ENCODE measurements at regions of chr16 and their contacts with region 1.

Region 1: GRCh38 chr16:29805378-29806098 is 791 bp upstream of the MAZ start:
- DNase-seq: peak; percentile 99
- ATAC-seq: peak; percentile 63
- H3K4me3 Mint-ChIP-seq: peak overlapping the region; percentile 100
- H3K27ac Mint-ChIP-seq: peak overlapping the region; percentile 96
- H3K4me1 Mint-ChIP-seq: peaks cover 30% of the 10 kb centered on the region
- H3K27me3 Mint-ChIP-seq: no peaks in the 10 kb centered on the region

Region 2: DNA sequence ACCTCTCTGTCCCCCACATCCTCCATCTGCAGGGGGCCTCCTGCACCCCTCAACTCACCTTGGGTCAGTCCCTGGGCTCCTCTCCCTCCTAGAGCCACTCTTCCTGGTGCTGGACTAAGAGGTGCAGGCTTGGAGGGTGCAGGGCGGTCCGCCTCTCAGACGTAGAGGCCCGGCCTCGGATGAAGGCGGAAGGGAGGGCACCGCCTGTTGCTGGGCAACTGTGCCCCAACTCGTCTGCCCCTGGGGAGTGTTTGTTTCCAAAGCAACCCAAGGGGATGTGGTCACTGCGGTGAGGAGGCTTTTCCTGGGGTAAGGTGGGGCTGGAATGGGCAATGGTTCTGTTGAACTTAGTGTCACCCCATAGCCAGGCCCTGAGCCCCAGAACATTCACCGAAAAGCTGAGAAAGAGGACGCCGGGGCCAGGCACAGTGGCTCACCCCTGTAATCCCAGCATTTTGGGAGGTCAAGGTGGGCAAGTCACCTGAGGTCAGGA is 59.6 kb before region 1 on chr16 and contains the start of gene C16orf54:
- POLR2A ChIA-PET with region 1: interaction called, 35 read pairs
- DNase-seq: peak; percentile 88
- ATAC-seq: peak; percentile 81
- H3K4me3 Mint-ChIP-seq: peak within 1 kb of the TSS; percentile 98
- H3K27ac Mint-ChIP-seq: peak within 1 kb of the TSS; percentile 98
- H3K4me1 Mint-ChIP-seq: peaks cover 38% of the 10 kb centered on the region
- H3K27me3 Mint-ChIP-seq: no peaks in the 10 kb centered on the region
- total RNA-seq, gene C16orf54: 84.2 to 88.0 TPM

Region 3: DNA sequence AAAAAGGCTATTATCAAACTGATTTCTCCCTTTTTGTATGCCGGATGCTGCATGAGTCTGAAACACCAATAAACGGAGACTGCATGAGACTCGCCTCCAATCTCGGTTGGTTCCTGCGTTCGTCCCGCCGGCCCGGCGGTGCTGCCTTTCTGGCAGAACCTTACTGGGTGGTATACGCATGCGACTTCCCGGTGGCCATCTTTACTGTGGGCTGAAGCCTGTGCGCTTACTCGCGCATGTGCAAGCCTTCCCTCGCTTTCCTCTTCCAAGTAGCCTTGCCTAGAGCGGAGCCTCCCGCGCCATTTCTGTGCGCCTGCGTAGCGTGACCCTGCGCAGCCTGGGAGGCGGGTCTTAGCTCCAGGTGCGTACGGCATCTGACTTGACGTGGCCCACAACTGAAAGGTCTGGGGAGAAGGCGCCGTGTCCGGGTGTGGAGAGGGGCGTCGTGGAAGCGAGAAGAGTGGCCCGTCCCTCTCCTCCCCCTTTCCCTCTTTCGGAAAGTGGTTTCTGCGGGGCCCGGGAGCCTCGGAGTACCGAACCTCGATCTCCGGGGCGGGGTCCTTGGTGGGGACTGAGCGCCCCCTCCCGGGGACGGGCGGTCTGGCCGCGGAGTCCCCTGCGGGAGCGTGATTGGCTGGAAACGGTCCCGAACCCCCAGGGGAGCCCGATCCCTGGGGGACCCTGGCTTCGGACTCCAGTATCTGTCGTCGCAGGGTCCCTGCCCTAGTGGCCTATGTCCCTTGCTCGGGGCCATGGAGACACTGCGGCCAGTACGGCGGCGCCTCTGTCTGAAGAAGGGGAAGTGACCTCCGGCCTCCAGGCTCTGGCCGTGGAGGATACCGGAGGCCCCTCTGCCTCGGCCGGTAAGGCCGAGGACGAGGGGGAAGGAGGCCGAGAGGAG is 10.5 kb after region 1 on chr16 and contains the start of gene PAGR1:
- POLR2A ChIA-PET with region 1: interaction called, 82 read pairs
- DNase-seq: peak; percentile 96
- ATAC-seq: peak; percentile 78
- H3K4me3 Mint-ChIP-seq: peak within 1 kb of the TSS; percentile 93
- H3K27ac Mint-ChIP-seq: peak within 1 kb of the TSS; percentile 96
- H3K4me1 Mint-ChIP-seq: peaks cover 39% of the 10 kb centered on the region
- H3K27me3 Mint-ChIP-seq: peaks cover 12% of the 10 kb centered on the region
- total RNA-seq, gene PAGR1: 29.8 to 34.3 TPM

Region 4: GRCh38 chr16:29926005-29926710 is 120.6 kb after region 1 on chr16 and contains the start of gene KCTD13:
- POLR2A ChIA-PET with region 1: interaction called, 12 read pairs
- DNase-seq: peak; percentile 99
- ATAC-seq: peak; percentile 92
- H3K4me3 Mint-ChIP-seq: peak within 1 kb of the TSS; percentile 94
- H3K27ac Mint-ChIP-seq: peak within 1 kb of the TSS; percentile 93
- H3K4me1 Mint-ChIP-seq: peaks cover 22% of the 10 kb centered on the region
- H3K27me3 Mint-ChIP-seq: peaks cover 3% of the 10 kb centered on the region
- total RNA-seq, gene KCTD13: 49.7 to 50.0 TPM